T-cell (primary cell): ENCODE measurements at regions of chr2 and their contacts with region 1.

Region 1: GRCh38 chr2:234500394-234501006 is 3.6 kb upstream of the ARL4C start:
- DNase-seq: peak; percentile 53 to 87 (median 71)
- ATAC-seq: peak; percentile 33 to 51 (median 40)
- H3K4me3 ChIP-seq: no peak overlapping the region
- H3K4me3 Mint-ChIP-seq: peak overlapping the region; percentile 38 to 62 (median 49)
- H3K27ac ChIP-seq: peak overlapping the region; percentile 54
- H3K27ac Mint-ChIP-seq: peak overlapping the region; percentile 87 to 97
- H3K4me1 ChIP-seq: peaks cover 21 to 29% of the 10 kb centered on the region in 2 experiments
- H3K4me1 Mint-ChIP-seq: peaks cover 30 to 33% (median 33%) of the 10 kb centered on the region in 3 donors
- H3K27me3 ChIP-seq: peaks cover 0 to 3% of the 10 kb centered on the region in 2 experiments
- H3K27me3 Mint-ChIP-seq: peaks cover 0 to 4% of the 10 kb centered on the region in 2 donors

Region 2: DNA sequence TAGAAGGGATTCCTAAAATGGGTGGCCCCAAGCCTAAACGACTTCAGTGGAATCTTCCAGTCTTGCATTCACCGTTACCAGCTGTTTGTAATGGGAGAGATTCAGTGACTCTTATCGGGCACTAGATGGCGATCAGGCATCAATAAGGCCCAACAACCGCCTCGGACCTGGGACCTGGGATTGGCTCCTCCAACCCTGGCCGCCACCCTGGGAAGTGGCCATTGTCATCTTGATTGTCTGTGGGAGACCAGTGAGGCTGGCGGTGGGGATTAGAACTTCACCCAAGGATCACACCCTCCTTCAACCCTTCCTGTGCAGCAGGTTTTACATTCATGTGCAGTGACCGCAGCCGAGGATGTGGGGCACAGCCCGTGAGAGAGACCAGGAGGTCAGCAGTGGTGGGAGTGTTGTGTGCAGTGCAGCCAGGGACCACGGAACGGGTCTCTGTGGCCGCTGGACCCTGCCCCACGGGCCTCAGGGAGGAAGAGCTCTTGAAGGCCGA is 364.7 kb before region 1 on chr2:
- CTCF ChIA-PET with region 1: interaction called, 5 to 14 read pairs
- POLR2A ChIA-PET with region 1: interaction called in 1 of 2 experiments, 3 read pairs
- DNase-seq: peak in 31 of 35 experiments; percentile 4 to 73 (median 24)
- ATAC-seq: peak; percentile 43 to 76 (median 65)
- H3K4me3 ChIP-seq: no peak overlapping the region
- H3K4me3 Mint-ChIP-seq: peak overlapping the region in 1 of 3 donors; percentile 17
- H3K27ac ChIP-seq: no peak overlapping the region
- H3K27ac Mint-ChIP-seq: peak overlapping the region; percentile 38 to 60
- H3K4me1 ChIP-seq: peaks cover 7 to 31% of the 10 kb centered on the region in 2 experiments
- H3K4me1 Mint-ChIP-seq: peaks cover 27 to 40% (median 32%) of the 10 kb centered on the region in 3 donors
- H3K27me3 ChIP-seq: no peaks in the 10 kb centered on the region
- H3K27me3 Mint-ChIP-seq: no peaks in the 10 kb centered on the region

Region 3: DNA sequence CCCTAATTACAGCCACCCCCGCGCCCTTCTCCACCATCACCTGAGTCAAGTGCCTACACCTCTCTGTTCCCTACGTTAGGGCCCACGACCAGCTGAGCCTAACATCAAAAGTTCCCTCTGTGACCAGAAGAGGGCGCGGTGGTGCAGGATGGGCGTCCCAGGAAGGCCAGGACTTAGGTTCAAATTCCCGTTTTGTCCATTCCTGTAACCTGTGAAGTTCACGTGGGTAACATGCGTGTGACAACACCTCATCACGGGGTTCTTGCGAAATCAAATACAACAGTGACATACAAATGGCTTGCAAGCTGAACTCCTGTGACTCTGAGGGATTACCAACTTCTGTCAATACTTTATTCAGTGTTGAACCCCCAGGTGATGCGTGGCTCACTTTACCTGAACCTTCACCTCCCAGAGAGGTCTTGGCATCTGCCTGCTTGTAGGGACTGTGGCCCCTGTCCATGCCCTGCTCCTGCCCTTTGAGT is 211.5 kb before region 1 on chr2:
- CTCF ChIA-PET with region 1: interaction called, 3 to 15 read pairs
- POLR2A ChIA-PET with region 1: interaction called, 4 to 53 read pairs
- DNase-seq: peak; percentile 53 to 88 (median 70)
- ATAC-seq: peak in 1 of 4 experiments; percentile 1
- H3K4me3 ChIP-seq: no peak overlapping the region
- H3K4me3 Mint-ChIP-seq: peak overlapping the region in 1 of 3 donors; percentile 75
- H3K27ac ChIP-seq: peak overlapping the region; percentile 100
- H3K27ac Mint-ChIP-seq: peak overlapping the region; percentile 91 to 99
- H3K4me1 ChIP-seq: peaks cover 42 to 65% of the 10 kb centered on the region in 2 experiments
- H3K4me1 Mint-ChIP-seq: peaks cover 68 to 80% (median 74%) of the 10 kb centered on the region in 3 donors
- H3K27me3 ChIP-seq: no peaks in the 10 kb centered on the region
- H3K27me3 Mint-ChIP-seq: no peaks in the 10 kb centered on the region

Region 4: GRCh38 chr2:234446404-234447076 is 54.0 kb before region 1 on chr2:
- CTCF ChIA-PET with region 1: interaction called, 3 to 6 read pairs
- POLR2A ChIA-PET with region 1: interaction called, 7 to 13 read pairs
- DNase-seq: peak; percentile 62 to 91 (median 80)
- ATAC-seq: peak; percentile 85 to 90 (median 88)
- H3K4me3 ChIP-seq: no peak overlapping the region
- H3K4me3 Mint-ChIP-seq: peak overlapping the region; percentile 49 to 74 (median 60)
- H3K27ac ChIP-seq: peak overlapping the region; percentile 98
- H3K27ac Mint-ChIP-seq: peak overlapping the region; percentile 98 to 99
- H3K4me1 ChIP-seq: peaks cover 72 to 78% of the 10 kb centered on the region in 2 experiments
- H3K4me1 Mint-ChIP-seq: peaks cover 89 to 98% (median 93%) of the 10 kb centered on the region in 3 donors
- H3K27me3 ChIP-seq: no peaks in the 10 kb centered on the region
- H3K27me3 Mint-ChIP-seq: no peaks in the 10 kb centered on the region

Region 5: GRCh38 chr2:234451852-234452625 is 48.5 kb before region 1 on chr2:
- CTCF ChIA-PET with region 1: interaction called in 1 of 2 experiments, 8 read pairs
- POLR2A ChIA-PET with region 1: interaction called, 8 to 17 read pairs
- DNase-seq: peak in 2 of 35 experiments; percentile 40 to 50
- ATAC-seq: peak in 3 of 4 experiments; percentile 3 to 11 (median 11)
- H3K4me3 ChIP-seq: peak overlapping the region; percentile 64 to 83
- H3K4me3 Mint-ChIP-seq: peak overlapping the region; percentile 87 to 90 (median 88)
- H3K27ac ChIP-seq: peak overlapping the region; percentile 90
- H3K27ac Mint-ChIP-seq: peak overlapping the region; percentile 91 to 99
- H3K4me1 ChIP-seq: peaks cover 49 to 68% of the 10 kb centered on the region in 2 experiments
- H3K4me1 Mint-ChIP-seq: peaks cover 82 to 94% (median 94%) of the 10 kb centered on the region in 3 donors
- H3K27me3 ChIP-seq: no peaks in the 10 kb centered on the region
- H3K27me3 Mint-ChIP-seq: no peaks in the 10 kb centered on the region

Region 6: GRCh38 chr2:234463626-234464290 is 36.7 kb before region 1 on chr2:
- CTCF ChIA-PET with region 1: interaction called in 1 of 2 experiments, 3 read pairs
- POLR2A ChIA-PET with region 1: interaction called, 5 to 11 read pairs
- DNase-seq: peak; percentile 54 to 93 (median 79)
- ATAC-seq: peak; percentile 88 to 92 (median 90)
- H3K4me3 ChIP-seq: peak overlapping the region in 1 of 2 donors; percentile 23
- H3K4me3 Mint-ChIP-seq: peak overlapping the region; percentile 65 to 74 (median 71)
- H3K27ac ChIP-seq: peak overlapping the region; percentile 98
- H3K27ac Mint-ChIP-seq: peak overlapping the region; percentile 96 to 97
- H3K4me1 ChIP-seq: peaks cover 39 to 74% of the 10 kb centered on the region in 2 experiments
- H3K4me1 Mint-ChIP-seq: peaks cover 78 to 91% (median 81%) of the 10 kb centered on the region in 3 donors
- H3K27me3 ChIP-seq: no peaks in the 10 kb centered on the region
- H3K27me3 Mint-ChIP-seq: no peaks in the 10 kb centered on the region

Region 7: DNA sequence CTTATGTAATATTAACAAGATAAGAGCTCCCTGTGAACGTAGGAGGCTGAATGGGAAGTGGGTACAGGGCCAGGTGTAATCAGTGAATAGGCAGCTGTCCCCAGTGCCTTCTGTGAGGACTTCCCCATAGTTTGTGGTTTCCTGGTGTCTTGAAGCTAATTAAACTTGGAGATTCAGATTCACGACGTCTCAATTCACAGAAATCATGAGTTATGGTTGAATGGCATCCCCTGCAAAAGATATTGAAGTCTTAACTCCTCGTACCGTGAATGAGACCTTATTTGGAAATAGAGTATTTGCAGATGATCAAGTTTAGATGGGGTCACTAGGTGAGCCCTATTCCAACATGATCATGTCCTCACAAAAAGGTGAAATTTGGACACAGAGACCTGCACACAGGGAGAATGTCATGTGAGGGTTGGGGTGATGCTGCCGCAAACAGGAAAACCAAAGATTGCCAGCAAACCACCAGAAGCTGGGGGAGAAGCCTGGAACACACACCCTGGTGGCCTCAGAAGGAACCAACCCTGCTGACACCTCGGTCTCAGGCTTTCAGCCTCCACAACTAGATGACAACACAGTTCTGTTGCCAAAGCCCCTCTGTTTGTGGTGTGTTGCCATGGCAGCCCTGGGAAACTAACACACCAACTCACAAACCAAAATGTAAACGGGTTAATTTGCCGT is 16.8 kb before region 1 on chr2:
- CTCF ChIA-PET with region 1: no interaction called
- POLR2A ChIA-PET with region 1: interaction called, 3 to 18 read pairs
- DNase-seq: peak; percentile 47 to 94 (median 87)
- ATAC-seq: peak; percentile 73 to 78 (median 77)
- H3K4me3 ChIP-seq: peak overlapping the region; percentile 11 to 26
- H3K4me3 Mint-ChIP-seq: peak overlapping the region; percentile 26 to 73 (median 51)
- H3K27ac ChIP-seq: peak overlapping the region; percentile 91
- H3K27ac Mint-ChIP-seq: peak overlapping the region; percentile 93 to 98
- H3K4me1 ChIP-seq: peaks cover 31 to 73% of the 10 kb centered on the region in 2 experiments
- H3K4me1 Mint-ChIP-seq: peaks cover 75 to 92% (median 90%) of the 10 kb centered on the region in 3 donors
- H3K27me3 ChIP-seq: no peaks in the 10 kb centered on the region
- H3K27me3 Mint-ChIP-seq: no peaks in the 10 kb centered on the region

Region 8: DNA sequence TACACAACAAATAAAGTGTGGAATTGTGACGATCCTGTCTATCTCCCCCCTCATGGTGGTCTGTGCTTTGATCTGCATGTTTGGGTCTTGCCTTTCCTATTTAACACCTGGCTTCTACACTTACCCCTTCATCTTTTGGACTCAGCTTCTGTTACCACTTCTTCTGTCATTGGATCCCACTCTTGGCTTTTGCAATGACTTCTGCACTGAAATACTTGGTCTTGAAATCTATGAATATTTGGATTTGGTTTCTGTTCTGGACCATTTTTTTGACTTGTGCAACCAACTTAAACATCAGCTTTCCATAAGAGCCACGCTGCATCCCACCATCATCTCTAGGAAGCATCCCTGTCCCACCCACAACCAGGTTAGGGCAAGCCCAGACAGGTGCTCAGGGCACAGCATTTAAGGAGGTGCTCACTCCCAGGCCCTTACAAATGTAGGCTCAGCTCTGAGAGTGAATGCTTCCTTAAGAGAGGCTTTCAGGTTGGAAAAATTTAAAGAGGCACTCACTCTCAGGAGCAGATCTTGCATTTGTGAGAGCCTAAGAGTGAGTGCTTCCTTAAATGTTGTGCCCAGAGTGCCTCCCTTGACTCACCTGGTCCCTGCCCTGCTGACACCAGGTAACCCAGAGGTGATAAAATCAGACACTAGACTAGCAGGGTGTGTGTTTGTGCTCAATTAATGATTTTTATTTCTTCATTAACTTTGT is 326.8 kb after region 1 on chr2:
- CTCF ChIA-PET with region 1: no interaction called
- POLR2A ChIA-PET with region 1: no interaction called
- DNase-seq: no peak
- ATAC-seq: no peak
- H3K4me3 ChIP-seq: no peak overlapping the region
- H3K4me3 Mint-ChIP-seq: no peak overlapping the region
- H3K27ac ChIP-seq: no peak overlapping the region
- H3K27ac Mint-ChIP-seq: no peak overlapping the region
- H3K4me1 ChIP-seq: no peaks in the 10 kb centered on the region
- H3K4me1 Mint-ChIP-seq: no peaks in the 10 kb centered on the region
- H3K27me3 ChIP-seq: peaks cover 0 to 7% of the 10 kb centered on the region in 2 experiments
- H3K27me3 Mint-ChIP-seq: peaks cover 0 to 2% of the 10 kb centered on the region in 2 donors